H1 (cell line): ENCODE measurements at regions of chr1 and their contacts with region 1.

Region 1: DNA sequence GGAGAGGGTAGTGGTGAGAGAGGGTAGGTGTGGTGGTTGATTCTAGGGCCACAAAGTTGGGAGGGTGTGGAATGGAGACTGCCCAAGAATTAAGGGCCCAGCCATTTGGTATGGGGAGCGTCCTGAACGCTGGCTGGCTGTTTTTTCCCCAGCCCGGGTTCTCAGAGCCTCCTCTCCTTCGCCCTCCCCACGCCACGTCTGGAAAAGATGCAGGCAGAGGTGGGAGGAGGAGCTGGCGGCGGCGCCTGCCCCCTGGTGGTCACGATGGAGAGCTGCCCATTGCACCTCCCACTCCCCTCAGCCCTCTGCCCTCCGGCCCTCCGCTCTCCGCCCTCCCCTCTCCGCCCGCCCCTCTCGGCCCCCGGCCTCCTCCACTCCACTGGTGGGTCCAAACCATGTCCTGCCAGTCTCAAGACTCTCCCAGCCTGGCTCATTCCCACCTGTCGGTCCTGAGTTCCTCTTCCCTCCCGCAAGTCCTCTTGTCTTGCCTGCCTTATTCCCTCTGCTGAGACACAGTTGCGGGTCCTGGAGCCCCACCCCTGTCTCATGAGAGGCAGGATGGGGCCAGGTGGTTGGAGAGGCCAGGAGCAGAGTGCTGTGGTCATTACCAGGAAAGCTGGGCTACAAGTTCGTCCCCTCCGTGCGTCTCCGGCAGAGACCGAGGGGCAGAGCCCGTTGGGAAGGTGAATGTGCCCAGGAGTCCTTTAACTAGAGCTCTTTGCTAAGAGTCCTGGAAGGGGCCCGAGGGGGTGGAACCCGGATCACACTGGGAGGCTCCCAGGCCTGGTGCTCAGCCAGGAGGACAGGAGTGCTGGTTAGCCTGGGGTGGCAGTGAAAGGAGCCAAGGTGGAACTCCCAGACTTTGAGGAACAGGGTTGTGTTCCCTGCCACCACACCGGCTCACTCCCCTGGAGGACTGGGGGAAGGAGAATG is 22.6 kb downstream of the ETNK2 start:
- DNase-seq: peak; percentile 56 to 94
- H3K4me3 ChIP-seq: peak overlapping the region in 2 of 4 experiments; percentile 19 to 47; a peak in 3 of 8 replicates
- H3K27ac ChIP-seq: peak overlapping the region; percentile 53; the same call in 1 of the 2 replicates
- H3K4me1 ChIP-seq: peaks cover 4 to 24% (median 7%) of the 10 kb centered on the region in 4 experiments
- H3K27me3 ChIP-seq: no peaks in the 10 kb centered on the region; a peak in 1 of 7 replicates
- CTCF ChIP-seq: peak in 2 of 3 experiments; percentile 83 to 84; a peak in 3 of 4 replicates
- EP300 ChIP-seq: no peak
- POLR2A ChIP-seq: peak in 1 of 2 experiments; percentile 49; a peak in 1 of 3 replicates
- RAD21 ChIP-seq: peak; percentile 81 to 88

Region 2: GRCh38 chr1:203861379-203862184 is 267.6 kb before region 1 on chr1 and contains the start of gene SNRPE:
- CTCF ChIA-PET with region 1: interaction called, 261 read pairs
- POLR2A ChIA-PET with region 1: interaction called, 174 read pairs
- DNase-seq: peak; percentile 96 to 98
- H3K4me3 ChIP-seq: peak within 1 kb of the TSS; percentile 81 to 99 (median 87)
- H3K27ac ChIP-seq: peak within 1 kb of the TSS; percentile 98
- H3K4me1 ChIP-seq: peaks cover 0 to 3% (median 1%) of the 10 kb centered on the region in 4 experiments; a peak in 2 of 7 replicates
- H3K27me3 ChIP-seq: no peaks in the 10 kb centered on the region
- CTCF ChIP-seq: peak; percentile 89 to 93 (median 92)
- EP300 ChIP-seq: peak in 1 of 2 experiments; percentile 63; a peak in 2 of 3 replicates
- POLR2A ChIP-seq: peak; percentile 70 to 89
- RAD21 ChIP-seq: peak; percentile 98
- total RNA-seq, gene SNRPE: 419 and 461 TPM in 2 replicates

Region 3: DNA sequence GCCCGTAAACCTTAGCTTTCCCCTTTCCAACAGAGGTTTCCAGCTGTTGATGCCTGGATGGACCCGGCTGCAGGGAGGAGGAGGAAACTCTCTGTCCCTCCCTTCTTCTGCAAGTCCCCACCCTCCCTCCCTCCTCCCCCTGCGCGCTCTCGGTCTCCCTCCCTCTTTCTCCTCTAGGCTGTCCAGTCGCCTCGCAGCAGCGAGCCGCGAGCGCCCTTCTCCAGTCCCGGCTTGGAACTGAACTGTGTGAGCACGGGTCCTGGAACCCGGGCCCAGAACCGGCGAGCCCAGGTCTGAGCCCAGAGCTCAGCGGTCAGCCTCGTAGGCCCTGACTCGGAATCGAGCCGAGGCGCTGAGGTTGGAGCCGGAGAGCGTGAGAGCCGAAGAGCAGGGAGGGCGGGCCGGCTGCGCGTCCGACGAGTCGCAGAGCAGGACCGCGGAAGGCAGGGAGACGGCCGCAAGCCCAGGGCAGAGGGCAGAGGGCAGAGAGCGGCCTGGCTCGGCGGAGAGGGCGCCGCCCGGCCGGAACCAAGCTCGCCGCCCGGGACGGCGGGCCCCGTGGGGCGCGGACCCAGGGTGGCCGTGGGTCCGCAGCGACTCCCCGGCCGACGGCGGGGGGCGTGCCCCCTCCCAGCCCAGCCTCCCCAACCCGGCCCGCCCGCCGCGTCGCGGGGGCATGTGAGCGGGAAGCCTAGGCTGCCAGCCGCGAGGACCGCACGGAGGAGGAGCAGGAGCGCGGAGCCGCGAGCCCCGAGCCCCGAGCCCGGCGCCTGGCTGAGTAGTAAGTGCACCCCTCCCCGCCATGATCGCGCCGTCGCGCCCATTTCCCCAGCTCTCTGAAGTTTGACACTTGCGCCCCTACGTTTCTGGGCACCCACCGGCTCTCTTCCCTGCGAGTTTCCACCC is 56.0 kb before region 1 on chr1 and contains the start of gene SOX13:
- CTCF ChIA-PET with region 1: interaction called, 107 read pairs
- POLR2A ChIA-PET with region 1: interaction called, 14 read pairs
- DNase-seq: peak; percentile 80 to 93
- H3K4me3 ChIP-seq: peak within 1 kb of the TSS; percentile 90 to 98 (median 94)
- H3K27ac ChIP-seq: peak within 1 kb of the TSS; percentile 71; the same call in 1 of the 2 replicates
- H3K4me1 ChIP-seq: peaks cover 13 to 31% (median 24%) of the 10 kb centered on the region in 4 experiments
- H3K27me3 ChIP-seq: no peaks in the 10 kb centered on the region
- CTCF ChIP-seq: peak; percentile 17 to 46 (median 21)
- EP300 ChIP-seq: no peak
- POLR2A ChIP-seq: peak; percentile 83 to 93
- RAD21 ChIP-seq: peak; percentile 49 to 72
- total RNA-seq, gene SOX13: 173 and 180 TPM in 2 replicates

Region 4: GRCh38 chr1:204089044-204089751 is 40.0 kb before region 1 on chr1:
- CTCF ChIA-PET with region 1: interaction called, 10 read pairs
- POLR2A ChIA-PET with region 1: interaction called, 5 read pairs
- DNase-seq: peak in 1 of 2 experiments; percentile 59
- H3K4me3 ChIP-seq: no peak overlapping the region
- H3K27ac ChIP-seq: no peak overlapping the region
- H3K4me1 ChIP-seq: peaks cover 37 to 64% (median 50%) of the 10 kb centered on the region in 4 experiments
- H3K27me3 ChIP-seq: no peaks in the 10 kb centered on the region
- CTCF ChIP-seq: peak in 1 of 3 experiments; percentile 12; a peak in 1 of 4 replicates
- EP300 ChIP-seq: no peak
- POLR2A ChIP-seq: no peak
- RAD21 ChIP-seq: peak in 1 of 2 experiments; percentile 30; a peak in 1 of 4 replicates

Region 5: DNA sequence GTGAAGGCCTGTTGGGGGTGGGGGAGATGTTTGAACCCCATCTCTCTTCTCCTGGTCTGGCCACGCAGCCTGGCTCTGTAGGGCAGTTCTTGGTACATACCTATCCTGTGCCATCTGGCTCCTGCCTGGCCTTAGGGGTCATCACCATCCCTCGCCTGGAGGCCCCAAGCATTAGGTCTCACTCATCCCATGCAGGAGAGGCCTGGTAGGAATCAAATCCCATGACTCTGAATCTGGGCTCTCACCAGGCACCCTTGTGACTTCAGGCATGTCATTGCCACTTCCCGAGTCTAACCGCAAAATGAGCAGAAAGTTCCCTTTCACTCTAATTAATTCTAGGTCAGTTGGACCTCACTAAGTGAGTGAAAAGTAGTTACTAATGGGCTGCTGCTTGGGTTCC is 14.6 kb before region 1 on chr1:
- CTCF ChIA-PET with region 1: interaction called, 105 read pairs
- POLR2A ChIA-PET with region 1: interaction called, 9 read pairs
- DNase-seq: no peak
- H3K4me3 ChIP-seq: no peak overlapping the region
- H3K27ac ChIP-seq: no peak overlapping the region
- H3K4me1 ChIP-seq: peaks cover 0 to 18% (median 13%) of the 10 kb centered on the region in 4 experiments; a peak in 6 of 7 replicates
- H3K27me3 ChIP-seq: no peaks in the 10 kb centered on the region; a peak in 1 of 7 replicates
- CTCF ChIP-seq: no peak
- EP300 ChIP-seq: no peak
- POLR2A ChIP-seq: no peak
- RAD21 ChIP-seq: no peak

Region 6: GRCh38 chr1:204151552-204152309 is 22.5 kb after region 1 on chr1 and contains the start of gene ETNK2:
- CTCF ChIA-PET with region 1: interaction called, 34 read pairs
- POLR2A ChIA-PET with region 1: interaction called, 19 read pairs
- DNase-seq: peak in 1 of 2 experiments; percentile 89
- H3K4me3 ChIP-seq: peak within 1 kb of the TSS; percentile 61 to 77 (median 68)
- H3K27ac ChIP-seq: no peak within 1 kb of the TSS
- H3K4me1 ChIP-seq: peaks cover 0 to 40% (median 28%) of the 10 kb centered on the region in 4 experiments; a peak in 6 of 7 replicates
- H3K27me3 ChIP-seq: peaks cover 0 to 18% (median 17%) of the 10 kb centered on the region in 4 experiments; a peak in 5 of 7 replicates
- CTCF ChIP-seq: no peak
- EP300 ChIP-seq: no peak
- POLR2A ChIP-seq: no peak
- RAD21 ChIP-seq: no peak
- total RNA-seq, gene ETNK2: 20.1 and 23.1 TPM in 2 replicates